CD4-positive, alpha-beta T cell (primary cell): ENCODE measurements at regions of chr15 and their contacts with region 1.

Region 1: DNA sequence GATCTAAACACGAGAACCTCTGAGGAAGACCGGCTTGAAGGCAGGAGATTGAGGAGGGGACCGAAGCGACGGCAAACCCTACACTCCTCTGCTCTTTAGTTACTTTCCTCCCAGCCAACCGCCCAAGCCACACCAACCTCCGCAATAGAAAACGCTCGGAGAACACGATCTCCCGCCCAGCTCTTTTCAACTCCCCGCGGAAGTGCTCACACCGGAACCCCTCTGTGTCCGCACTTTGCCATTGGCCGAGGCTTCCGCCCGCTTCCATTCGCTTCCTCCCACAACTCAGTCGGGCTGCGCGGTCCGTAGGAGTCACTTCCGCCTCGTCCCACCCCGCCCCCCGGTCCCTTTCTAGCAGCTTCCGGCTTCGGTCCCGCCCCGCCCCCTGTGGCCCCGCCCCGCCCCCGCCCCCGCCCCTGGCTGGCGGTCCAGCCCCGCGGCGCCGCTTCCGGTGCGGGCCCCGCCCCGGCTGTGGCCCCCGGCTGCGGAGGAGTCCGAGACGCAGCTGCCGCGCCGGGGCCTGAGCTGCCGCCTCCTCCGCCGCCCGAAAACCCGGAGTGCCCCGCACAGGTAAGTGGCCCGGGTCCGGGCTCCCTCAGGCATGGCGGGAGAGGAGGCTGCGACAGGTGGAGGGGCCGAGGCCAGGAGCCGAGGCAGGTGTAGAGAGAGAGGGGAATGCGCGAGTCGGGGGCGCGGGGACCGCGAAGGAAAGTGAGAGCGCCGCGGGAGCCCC is at the start of gene ARID3B:
- DNase-seq: peak; percentile 90 to 98 (median 94)
- ATAC-seq: peak; percentile 82
- H3K4me3 ChIP-seq: peak within 1 kb of the TSS; percentile 100
- H3K4me3 Mint-ChIP-seq: peak within 1 kb of the TSS; percentile 95
- H3K27ac ChIP-seq: peak within 1 kb of the TSS; percentile 82 to 85
- H3K27ac Mint-ChIP-seq: peak within 1 kb of the TSS; percentile 91
- H3K4me1 ChIP-seq: peaks cover 44% of the 10 kb centered on the region
- H3K4me1 Mint-ChIP-seq: peaks cover 52% of the 10 kb centered on the region
- H3K27me3 ChIP-seq: no peaks in the 10 kb centered on the region
- H3K27me3 Mint-ChIP-seq: no peaks in the 10 kb centered on the region
- CTCF ChIP-seq: no peak
- total RNA-seq, gene ARID3B: 25.0 to 27.9 TPM

Region 2: GRCh38 chr15:74373731-74374647 is 166.9 kb before region 1 on chr15:
- CTCF ChIA-PET with region 1: no interaction called
- POLR2A ChIA-PET with region 1: no interaction called
- intact Hi-C with region 1: loop called (anchors 2 to 5 kb)
- DNase-seq: peak; percentile 91 to 97 (median 95)
- ATAC-seq: peak; percentile 95
- H3K4me3 ChIP-seq: peak overlapping the region; percentile 94
- H3K4me3 Mint-ChIP-seq: peak overlapping the region; percentile 86
- H3K27ac ChIP-seq: peak overlapping the region; percentile 51 to 54
- H3K27ac Mint-ChIP-seq: peak overlapping the region; percentile 8
- H3K4me1 ChIP-seq: peaks cover 26% of the 10 kb centered on the region
- H3K4me1 Mint-ChIP-seq: peaks cover 12% of the 10 kb centered on the region
- H3K27me3 ChIP-seq: peaks cover 0 to 2% of the 10 kb centered on the region in 2 experiments
- H3K27me3 Mint-ChIP-seq: peaks cover 13% of the 10 kb centered on the region
- CTCF ChIP-seq: peak; percentile 99

Region 3: DNA sequence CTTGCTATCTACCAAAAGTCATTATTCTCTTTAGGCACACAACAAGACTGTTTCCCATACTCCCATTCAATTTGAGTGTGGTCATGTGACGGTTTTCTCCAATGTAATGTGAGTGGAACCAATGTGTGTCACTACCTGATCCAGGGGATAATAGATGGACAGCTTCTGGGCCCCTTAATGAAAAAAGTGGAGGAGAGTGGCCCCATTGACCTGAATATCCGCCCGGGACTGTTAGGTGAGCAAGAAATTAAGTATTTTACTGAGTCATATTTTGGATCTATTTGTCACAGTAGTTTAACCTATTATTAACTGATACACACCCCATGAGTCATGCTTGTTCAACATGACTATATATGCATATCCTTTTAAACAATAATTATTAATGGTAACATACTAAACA is 15.0 kb before region 1 on chr15:
- CTCF ChIA-PET with region 1: no interaction called
- POLR2A ChIA-PET with region 1: no interaction called
- intact Hi-C with region 1: no loop called
- DNase-seq: no peak
- ATAC-seq: no peak
- H3K4me3 ChIP-seq: no peak overlapping the region
- H3K4me3 Mint-ChIP-seq: no peak overlapping the region
- H3K27ac ChIP-seq: no peak overlapping the region
- H3K27ac Mint-ChIP-seq: no peak overlapping the region
- H3K4me1 ChIP-seq: no peaks in the 10 kb centered on the region
- H3K4me1 Mint-ChIP-seq: no peaks in the 10 kb centered on the region
- H3K27me3 ChIP-seq: no peaks in the 10 kb centered on the region
- H3K27me3 Mint-ChIP-seq: no peaks in the 10 kb centered on the region
- CTCF ChIP-seq: no peak

Region 4: GRCh38 chr15:74589826-74590225 is 48.9 kb after region 1 on chr15:
- CTCF ChIA-PET with region 1: no interaction called
- POLR2A ChIA-PET with region 1: no interaction called
- intact Hi-C with region 1: loop called in 1 of 2 experiments (anchors 5 kb)
- DNase-seq: no peak
- ATAC-seq: no peak
- H3K4me3 ChIP-seq: no peak overlapping the region
- H3K4me3 Mint-ChIP-seq: no peak overlapping the region
- H3K27ac ChIP-seq: no peak overlapping the region
- H3K27ac Mint-ChIP-seq: no peak overlapping the region
- H3K4me1 ChIP-seq: no peaks in the 10 kb centered on the region
- H3K4me1 Mint-ChIP-seq: no peaks in the 10 kb centered on the region
- H3K27me3 ChIP-seq: no peaks in the 10 kb centered on the region
- H3K27me3 Mint-ChIP-seq: no peaks in the 10 kb centered on the region
- CTCF ChIP-seq: no peak

Region 5: DNA sequence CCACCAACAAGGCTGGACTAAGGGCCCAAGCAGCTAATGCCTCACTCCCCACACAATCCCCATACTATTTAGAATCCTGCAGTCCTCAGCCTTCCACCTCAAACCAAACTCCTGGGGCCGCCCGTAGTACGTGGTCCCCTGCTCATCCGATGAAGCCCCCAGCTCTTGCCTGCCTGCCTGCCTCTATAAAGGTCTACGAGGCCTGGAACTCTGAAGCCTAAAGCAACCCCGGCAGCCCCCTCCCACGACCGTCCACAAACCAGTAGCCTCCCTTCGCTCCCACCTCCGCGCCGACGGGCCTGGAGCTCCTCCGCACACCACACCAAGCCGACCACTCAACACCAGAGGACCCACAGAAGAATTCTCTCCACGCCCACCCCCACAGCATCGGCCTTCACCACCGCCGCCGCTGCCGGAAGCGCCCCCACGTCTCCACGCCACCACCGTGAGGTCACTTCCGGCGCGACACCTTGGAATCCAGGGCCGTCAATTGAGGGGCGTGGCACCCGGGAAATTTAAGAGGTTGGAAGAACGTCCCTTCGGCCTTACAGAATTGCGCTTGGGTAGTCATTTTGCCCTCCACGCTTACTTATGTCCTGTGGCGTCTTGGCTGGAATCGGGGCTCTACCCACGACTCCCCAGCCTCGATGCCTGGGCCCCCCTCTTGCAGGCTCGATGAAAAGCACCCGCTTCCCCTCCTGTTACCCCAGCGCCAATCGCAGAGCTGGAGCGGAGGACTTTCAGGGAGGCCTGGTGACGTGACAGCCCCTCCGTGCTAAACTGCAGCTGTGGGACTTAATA is 154.9 kb after region 1 on chr15 and contains the start of gene EDC3:
- CTCF ChIA-PET with region 1: no interaction called
- POLR2A ChIA-PET with region 1: no interaction called
- intact Hi-C with region 1: loop called in 1 of 2 experiments (anchors 5 kb)
- DNase-seq: peak; percentile 70 to 93 (median 80)
- ATAC-seq: peak; percentile 86
- H3K4me3 ChIP-seq: peak within 1 kb of the TSS; percentile 78
- H3K4me3 Mint-ChIP-seq: peak within 1 kb of the TSS; percentile 100
- H3K27ac ChIP-seq: peak within 1 kb of the TSS; percentile 60 to 83
- H3K27ac Mint-ChIP-seq: peak within 1 kb of the TSS; percentile 98
- H3K4me1 ChIP-seq: peaks cover 16% of the 10 kb centered on the region
- H3K4me1 Mint-ChIP-seq: peaks cover 44% of the 10 kb centered on the region
- H3K27me3 ChIP-seq: no peaks in the 10 kb centered on the region
- H3K27me3 Mint-ChIP-seq: peaks cover under 1% of the 10 kb centered on the region
- CTCF ChIP-seq: no peak
- total RNA-seq, gene EDC3: 11.0 to 11.1 TPM

Region 6: DNA sequence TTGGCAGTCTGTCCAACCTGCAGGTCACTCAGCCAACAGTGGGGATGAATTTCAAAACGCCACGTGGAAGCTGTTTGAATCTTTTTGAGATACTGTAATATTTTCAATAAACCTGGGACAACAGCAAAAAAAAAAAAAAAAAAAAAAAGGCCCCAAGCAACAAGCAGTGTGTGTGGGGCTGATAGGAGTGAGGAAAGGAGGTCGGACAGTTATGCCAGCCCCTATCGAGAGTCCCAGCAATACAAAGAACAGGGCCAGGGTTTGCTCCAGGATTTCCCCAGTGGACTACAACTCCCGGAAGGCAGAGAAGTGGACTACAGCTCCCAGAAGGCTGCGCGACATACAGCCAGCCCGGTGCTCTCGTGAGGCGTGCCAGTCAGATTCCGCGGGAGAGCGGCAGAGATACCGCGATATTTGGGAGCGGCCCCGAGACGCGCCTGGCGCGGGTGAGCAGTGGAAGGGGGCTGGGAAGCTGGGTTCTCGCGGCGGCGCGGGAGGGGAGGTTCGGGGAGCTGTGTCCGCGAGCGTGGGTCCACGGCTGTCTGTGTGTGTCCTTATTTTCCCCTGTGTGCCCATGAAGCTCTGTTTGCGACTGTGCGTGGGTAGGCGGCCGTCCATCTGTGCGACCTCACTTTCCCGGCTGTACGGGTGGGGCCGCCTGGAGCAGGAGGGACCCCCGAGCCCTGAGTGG is 482.4 kb after region 1 on chr15 and contains the start of gene PPCDC:
- CTCF ChIA-PET with region 1: no interaction called
- POLR2A ChIA-PET with region 1: interaction called, 3 read pairs
- intact Hi-C with region 1: loop called in 1 of 2 experiments (anchors 10 kb)
- DNase-seq: peak; percentile 83 to 96 (median 90)
- ATAC-seq: peak; percentile 100
- H3K4me3 ChIP-seq: peak within 1 kb of the TSS; percentile 81
- H3K4me3 Mint-ChIP-seq: peak within 1 kb of the TSS; percentile 99
- H3K27ac ChIP-seq: peak within 1 kb of the TSS; percentile 46 to 50
- H3K27ac Mint-ChIP-seq: peak within 1 kb of the TSS; percentile 94
- H3K4me1 ChIP-seq: peaks cover 20% of the 10 kb centered on the region
- H3K4me1 Mint-ChIP-seq: peaks cover 23% of the 10 kb centered on the region
- H3K27me3 ChIP-seq: no peaks in the 10 kb centered on the region
- H3K27me3 Mint-ChIP-seq: no peaks in the 10 kb centered on the region
- CTCF ChIP-seq: no peak
- total RNA-seq, gene PPCDC: 5.5 to 5.8 TPM

Region 7: GRCh38 chr15:75861750-75862402 is 1320.9 kb after region 1 on chr15:
- CTCF ChIA-PET with region 1: no interaction called
- POLR2A ChIA-PET with region 1: no interaction called
- intact Hi-C with region 1: no loop called
- DNase-seq: no peak
- ATAC-seq: no peak
- H3K4me3 ChIP-seq: no peak overlapping the region
- H3K4me3 Mint-ChIP-seq: no peak overlapping the region
- H3K27ac ChIP-seq: no peak overlapping the region
- H3K27ac Mint-ChIP-seq: no peak overlapping the region
- H3K4me1 ChIP-seq: no peaks in the 10 kb centered on the region
- H3K4me1 Mint-ChIP-seq: peaks cover 72% of the 10 kb centered on the region
- H3K27me3 ChIP-seq: no peaks in the 10 kb centered on the region
- H3K27me3 Mint-ChIP-seq: no peaks in the 10 kb centered on the region
- CTCF ChIP-seq: no peak